BJ (cell line): ENCODE measurements at regions of chr17 and their contacts with region 1.

Region 1: GRCh38 chr17:58643140-58643539 is 48.7 kb downstream of the TEX14 start:
- DNase-seq: no peak
- H3K4me3 ChIP-seq: no peak overlapping the region
- H3K27me3 ChIP-seq: no peaks in the 10 kb centered on the region
- CTCF ChIP-seq: no peak

Region 2: GRCh38 chr17:58417300-58418092 is 225.6 kb before region 1 on chr17 and contains the start of gene RNF43:
- CTCF ChIA-PET with region 1: no interaction called
- POLR2A ChIA-PET with region 1: no interaction called
- DNase-seq: peak; percentile 41
- H3K4me3 ChIP-seq: peak within 1 kb of the TSS; percentile 31; the same call in 1 of the 2 replicates
- H3K27me3 ChIP-seq: peaks cover 2% of the 10 kb centered on the region; the same call in 1 of the 2 replicates
- CTCF ChIP-seq: peak; percentile 93
- polyA plus RNA-seq, gene RNF43: not detected in 2 replicates

Region 3: GRCh38 chr17:58631523-58632323 is 11.4 kb before region 1 on chr17:
- CTCF ChIA-PET with region 1: interaction called, 4 read pairs
- POLR2A ChIA-PET with region 1: interaction called, 16 read pairs
- DNase-seq: peak; percentile 83
- H3K4me3 ChIP-seq: peak overlapping the region; percentile 29
- H3K27me3 ChIP-seq: no peaks in the 10 kb centered on the region
- CTCF ChIP-seq: peak; percentile 19; the same call in 1 of the 2 replicates

Region 4: GRCh38 chr17:58686980-58687379 is 43.8 kb after region 1 on chr17:
- CTCF ChIA-PET with region 1: no interaction called
- POLR2A ChIA-PET with region 1: no interaction called
- DNase-seq: no peak
- H3K4me3 ChIP-seq: no peak overlapping the region
- H3K27me3 ChIP-seq: no peaks in the 10 kb centered on the region
- CTCF ChIP-seq: no peak